ENCODE measurements at regions of chr2 and their contacts with region 1.

Region 1: GRCh38 chr2:172555522-172556283 is at the start of gene PDK1:
- DNase-seq: peak; percentile 52 to 93
- H3K4me3 ChIP-seq: peak within 1 kb of the TSS; percentile 96 to 97
- H3K27ac ChIP-seq: peak within 1 kb of the TSS; percentile 93 to 95
- H3K4me1 ChIP-seq: peaks cover 0 to 10% of the 10 kb centered on the region in 2 donors
- H3K27me3 ChIP-seq: no peaks in the 10 kb centered on the region
- CTCF ChIP-seq: no peak
- total RNA-seq, gene PDK1: 24.2 TPM

Region 2: DNA sequence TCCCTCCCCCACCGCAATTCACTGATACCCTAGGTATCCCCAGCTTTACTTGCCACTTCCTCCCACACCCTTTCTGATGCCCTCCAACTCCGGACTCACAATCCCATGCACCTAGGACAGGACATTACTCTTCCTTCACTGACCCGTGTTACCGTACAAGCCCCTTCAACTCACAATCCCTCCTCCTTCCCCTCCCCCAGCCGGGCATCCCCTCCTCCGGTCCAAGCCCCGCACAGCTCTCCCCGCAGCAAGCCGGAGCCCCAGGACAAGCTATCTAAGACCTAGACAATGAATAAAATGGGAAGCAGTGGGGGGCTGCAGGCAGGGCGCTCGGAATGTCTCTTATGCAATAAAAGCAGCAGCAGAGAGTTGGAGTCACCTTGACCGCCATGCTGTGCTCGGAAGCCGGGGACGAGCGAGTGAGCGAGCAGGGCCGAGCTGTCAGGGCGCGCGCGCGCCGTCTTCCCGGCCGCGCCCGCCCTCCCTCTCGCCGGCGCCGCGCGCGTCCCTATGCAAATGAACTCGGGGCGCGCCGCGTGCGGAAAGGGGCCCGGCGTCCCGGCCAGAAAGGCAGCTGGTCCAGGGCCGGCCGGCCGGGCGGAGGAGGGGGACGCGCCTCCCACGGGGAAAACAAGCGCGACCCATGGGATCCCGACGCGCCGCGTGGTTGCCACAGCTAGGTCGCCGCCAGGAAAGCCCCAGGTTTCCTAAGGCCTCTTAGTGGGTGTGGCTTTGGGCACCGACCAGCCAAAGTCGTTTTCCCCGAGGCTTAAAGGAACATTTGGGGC is 661.7 kb before region 1 on chr2 and contains the start of gene SLC25A12:
- intact Hi-C with region 1: loop called (anchors 10 kb)
- DNase-seq: peak; percentile 12 to 85
- H3K4me3 ChIP-seq: peak within 1 kb of the TSS; percentile 95 to 98
- H3K27ac ChIP-seq: peak within 1 kb of the TSS; percentile 66 to 87
- H3K4me1 ChIP-seq: peaks cover 0 to 15% of the 10 kb centered on the region in 2 donors
- H3K27me3 ChIP-seq: no peaks in the 10 kb centered on the region
- CTCF ChIP-seq: no peak
- total RNA-seq, gene SLC25A12: 11.9 TPM

Region 3: GRCh38 chr2:172095146-172095904 is 460.4 kb before region 1 on chr2:
- intact Hi-C with region 1: loop called (anchors 10 kb)
- DNase-seq: no peak
- H3K4me3 ChIP-seq: peak overlapping the region; percentile 48 to 67
- H3K27ac ChIP-seq: no peak overlapping the region
- H3K4me1 ChIP-seq: peaks cover 30 to 48% of the 10 kb centered on the region in 2 donors
- H3K27me3 ChIP-seq: peaks cover 66% of the 10 kb centered on the region
- CTCF ChIP-seq: no peak

Region 4: GRCh38 chr2:174248187-174248997 is 1692.7 kb after region 1 on chr2 and contains the start of gene OLA1:
- intact Hi-C with region 1: loop called (anchors 10 kb)
- DNase-seq: peak; percentile 75 to 96
- H3K4me3 ChIP-seq: peak within 1 kb of the TSS; percentile 77 to 91
- H3K27ac ChIP-seq: peak within 1 kb of the TSS; percentile 68 to 91
- H3K4me1 ChIP-seq: peaks cover 5 to 6% of the 10 kb centered on the region in 2 donors
- H3K27me3 ChIP-seq: no peaks in the 10 kb centered on the region
- CTCF ChIP-seq: peak in 1 of 3 experiments; percentile 3
- total RNA-seq, gene OLA1: 29.5 TPM